ENCODE measurements at regions of chr19 and their contacts with region 1.

Region 1: GRCh38 chr19:5967994-5968430 is 9.9 kb downstream of the RANBP3 start:
- DNase-seq: peak; percentile 84
- H3K4me3 ChIP-seq: no peak overlapping the region
- H3K27ac ChIP-seq: peak overlapping the region; percentile 61
- H3K4me1 ChIP-seq: peaks cover 16% of the 10 kb centered on the region
- H3K27me3 ChIP-seq: no peaks in the 10 kb centered on the region
- CTCF ChIP-seq: peak; percentile 85 to 86
- POLR2A ChIP-seq: no peak

Region 2: GRCh38 chr19:5934774-5935472 is 33.1 kb before region 1 on chr19:
- CTCF ChIA-PET with region 1: interaction called, 28 read pairs
- POLR2A ChIA-PET with region 1: no interaction called
- dilution Hi-C with region 1: no loop called
- intact Hi-C with region 1: no loop called
- DNase-seq: peak; percentile 81
- H3K4me3 ChIP-seq: no peak overlapping the region
- H3K27ac ChIP-seq: peak overlapping the region; percentile 42
- H3K4me1 ChIP-seq: peaks cover 30% of the 10 kb centered on the region
- H3K27me3 ChIP-seq: no peaks in the 10 kb centered on the region
- CTCF ChIP-seq: no peak
- POLR2A ChIP-seq: no peak

Region 3: DNA sequence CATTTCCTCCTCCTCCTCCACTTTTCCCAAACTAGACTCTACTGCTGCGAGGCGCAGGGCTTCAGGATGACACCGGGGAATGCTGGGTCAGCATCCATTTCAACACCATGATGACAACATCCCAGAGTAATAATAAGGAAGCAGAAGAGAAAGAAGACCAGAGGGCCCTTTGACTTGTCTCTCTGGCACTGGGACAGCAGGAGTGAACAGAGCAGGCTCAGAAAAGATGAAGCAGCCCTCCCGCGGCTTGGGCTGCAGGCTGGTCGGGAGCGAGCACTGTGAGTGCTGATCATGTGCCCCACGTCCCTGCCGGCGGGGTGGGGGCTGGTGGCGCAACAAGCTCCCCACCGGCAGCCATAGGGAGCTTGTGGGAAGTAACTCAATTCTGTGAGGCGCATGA is 20.6 kb before region 1 on chr19:
- CTCF ChIA-PET with region 1: interaction called, 46 read pairs
- POLR2A ChIA-PET with region 1: no interaction called
- dilution Hi-C with region 1: no loop called
- intact Hi-C with region 1: no loop called
- DNase-seq: no peak
- H3K4me3 ChIP-seq: no peak overlapping the region
- H3K27ac ChIP-seq: no peak overlapping the region
- H3K4me1 ChIP-seq: peaks cover 15% of the 10 kb centered on the region
- H3K27me3 ChIP-seq: no peaks in the 10 kb centered on the region
- CTCF ChIP-seq: no peak
- POLR2A ChIP-seq: no peak

Region 4: DNA sequence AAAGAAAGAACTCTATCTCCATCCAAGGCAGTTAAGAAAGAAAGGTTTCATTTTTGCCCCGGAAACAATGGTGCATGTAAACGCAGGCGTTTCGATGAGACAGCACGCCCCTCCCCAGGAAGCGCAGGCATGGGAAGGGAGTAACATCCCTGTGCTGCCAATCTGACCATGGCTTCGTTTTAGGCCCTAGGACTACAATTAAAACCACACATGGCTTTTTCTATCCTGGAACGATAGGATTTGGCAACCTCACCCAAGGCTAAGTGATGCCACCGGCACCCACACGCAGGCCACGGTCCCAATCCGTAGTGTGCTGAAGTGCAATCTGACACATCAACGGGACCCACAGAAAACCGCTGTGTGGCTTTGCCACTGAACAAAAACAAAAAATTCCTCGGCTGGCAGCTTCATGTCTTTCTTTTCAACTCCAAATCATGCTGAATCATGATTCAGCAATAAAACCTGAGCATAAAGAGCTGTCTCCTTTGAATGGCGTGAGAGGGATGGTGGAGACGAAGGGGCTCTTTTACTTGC is 14.3 kb before region 1 on chr19:
- CTCF ChIA-PET with region 1: interaction called, 46 read pairs
- POLR2A ChIA-PET with region 1: no interaction called
- dilution Hi-C with region 1: no loop called
- intact Hi-C with region 1: no loop called
- DNase-seq: no peak
- H3K4me3 ChIP-seq: no peak overlapping the region
- H3K27ac ChIP-seq: peak overlapping the region; percentile 24
- H3K4me1 ChIP-seq: peaks cover 41% of the 10 kb centered on the region
- H3K27me3 ChIP-seq: no peaks in the 10 kb centered on the region
- CTCF ChIP-seq: no peak
- POLR2A ChIP-seq: no peak

Region 5: GRCh38 chr19:5987077-5987818 is 19.2 kb after region 1 on chr19:
- CTCF ChIA-PET with region 1: interaction called, 53 read pairs
- POLR2A ChIA-PET with region 1: no interaction called
- dilution Hi-C with region 1: no loop called
- intact Hi-C with region 1: no loop called
- DNase-seq: peak; percentile 86
- H3K4me3 ChIP-seq: no peak overlapping the region
- H3K27ac ChIP-seq: no peak overlapping the region
- H3K4me1 ChIP-seq: peaks cover 17% of the 10 kb centered on the region
- H3K27me3 ChIP-seq: no peaks in the 10 kb centered on the region
- CTCF ChIP-seq: peak; percentile 86 to 94
- POLR2A ChIP-seq: no peak

Region 6: DNA sequence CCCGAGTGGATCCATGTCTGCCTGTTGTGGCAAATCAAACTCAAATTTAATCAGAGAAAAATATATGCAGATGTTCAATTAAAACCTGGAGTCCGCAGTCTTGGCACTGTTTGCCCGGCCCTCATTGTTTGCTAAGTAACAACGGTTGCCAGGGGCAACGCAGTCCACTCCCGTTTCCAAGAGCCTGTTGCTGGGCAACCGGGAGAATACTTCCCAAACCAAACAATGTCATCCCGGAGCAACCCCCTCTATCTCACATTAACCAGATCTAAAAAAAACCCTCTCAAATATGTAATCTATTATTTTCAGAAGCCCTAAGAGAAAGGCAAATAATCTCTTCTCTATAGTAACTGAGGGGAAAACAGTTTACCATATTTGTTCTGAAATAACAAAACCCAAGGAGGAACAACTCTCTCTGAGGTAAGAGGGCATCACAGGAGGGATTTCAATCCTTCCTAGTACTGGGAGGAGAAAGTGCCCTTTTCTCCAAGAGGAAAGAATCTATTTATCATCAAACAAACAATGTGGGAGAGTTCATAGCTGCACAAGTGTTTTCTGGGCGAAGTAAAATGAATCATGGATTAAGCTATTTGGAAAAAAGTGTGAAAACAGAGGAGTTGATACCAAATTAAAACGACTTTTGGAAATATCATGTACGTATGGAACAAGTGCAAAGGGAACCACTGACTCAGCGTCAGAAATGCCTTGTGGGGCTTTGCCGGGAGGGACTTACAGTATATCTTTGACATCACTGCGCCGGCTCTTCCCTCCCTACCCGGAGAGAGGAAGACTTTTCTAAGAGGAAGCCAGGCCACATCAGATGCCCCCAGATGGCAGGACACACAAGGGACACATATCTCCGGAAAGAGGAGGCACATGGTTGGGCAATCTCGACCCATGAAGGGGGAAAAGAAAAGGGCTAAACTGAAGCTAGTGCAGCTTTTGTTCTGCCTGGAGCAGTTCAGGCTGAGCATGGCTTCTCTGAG is 98.9 kb after region 1 on chr19:
- CTCF ChIA-PET with region 1: no interaction called
- POLR2A ChIA-PET with region 1: no interaction called
- dilution Hi-C with region 1: no loop called
- intact Hi-C with region 1: no loop called
- DNase-seq: peak; percentile 99
- H3K4me3 ChIP-seq: no peak overlapping the region
- H3K27ac ChIP-seq: peak overlapping the region; percentile 100
- H3K4me1 ChIP-seq: peaks cover 54% of the 10 kb centered on the region
- H3K27me3 ChIP-seq: no peaks in the 10 kb centered on the region
- CTCF ChIP-seq: no peak
- POLR2A ChIP-seq: no peak